GM12878 (cell line): ENCODE measurements at regions of chr12 and their contacts with region 1.

Region 1: DNA sequence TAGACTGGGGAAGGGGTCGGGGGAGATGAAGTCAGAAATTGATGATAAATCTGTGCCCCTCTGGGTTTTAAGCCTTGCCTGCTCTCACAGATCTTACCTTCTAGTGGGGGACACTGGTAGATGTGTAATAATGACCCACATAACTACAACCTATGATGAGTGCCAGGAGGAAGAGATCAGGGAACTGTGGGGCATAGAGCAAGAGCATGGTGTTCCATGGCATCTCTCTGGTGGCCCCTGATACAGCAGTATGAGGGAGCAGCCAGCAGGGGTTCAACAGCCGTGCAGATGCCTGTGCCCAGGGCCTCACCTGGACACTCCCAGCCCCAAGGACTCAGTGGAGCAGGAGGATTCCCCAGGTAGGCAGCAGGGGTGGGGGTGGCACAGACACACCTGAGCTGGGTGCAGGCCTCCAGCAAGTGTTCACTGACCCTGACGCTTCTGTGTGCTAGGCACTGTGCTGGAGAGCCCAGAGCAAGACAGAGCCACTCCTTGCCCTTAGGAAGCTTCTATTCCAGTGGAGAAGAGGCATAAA is 5.0 kb downstream of the ACACB start:
- DNase-seq: no peak
- ATAC-seq: no peak
- H3K4me3 ChIP-seq: no peak overlapping the region
- H3K27ac ChIP-seq: no peak overlapping the region
- H3K4me1 ChIP-seq: no peaks in the 10 kb centered on the region
- H3K27me3 ChIP-seq: no peaks in the 10 kb centered on the region
- CTCF ChIP-seq: no peak
- EP300 ChIP-seq: no peak
- POLR2A ChIP-seq: no peak
- RAD21 ChIP-seq: no peak

Region 2: GRCh38 chr12:108930155-108930554 is 191.3 kb before region 1 on chr12:
- CTCF ChIA-PET with region 1: no interaction called
- POLR2A ChIA-PET with region 1: no interaction called
- RAD21 ChIA-PET with region 1: no interaction called
- SMC1A ChIA-PET with region 1: no interaction called
- in situ Hi-C with region 1: no loop called
- intact Hi-C with region 1: no loop called
- DNase-seq: peak; percentile 35
- ATAC-seq: peak; percentile 96
- H3K4me3 ChIP-seq: no peak overlapping the region
- H3K27ac ChIP-seq: no peak overlapping the region
- H3K4me1 ChIP-seq: peaks cover 19% of the 10 kb centered on the region
- H3K27me3 ChIP-seq: no peaks in the 10 kb centered on the region
- CTCF ChIP-seq: no peak
- EP300 ChIP-seq: no peak
- POLR2A ChIP-seq: no peak
- RAD21 ChIP-seq: no peak

Region 3: GRCh38 chr12:109054520-109054919 is 66.9 kb before region 1 on chr12:
- CTCF ChIA-PET with region 1: no interaction called
- POLR2A ChIA-PET with region 1: no interaction called
- RAD21 ChIA-PET with region 1: no interaction called
- SMC1A ChIA-PET with region 1: no interaction called
- in situ Hi-C with region 1: no loop called
- intact Hi-C with region 1: no loop called
- DNase-seq: no peak
- ATAC-seq: no peak
- H3K4me3 ChIP-seq: no peak overlapping the region; the same call in 1 of the 2 replicates
- H3K27ac ChIP-seq: peak overlapping the region; percentile 89
- H3K4me1 ChIP-seq: peaks cover 8% of the 10 kb centered on the region; the same call in 1 of the 2 replicates
- H3K27me3 ChIP-seq: no peaks in the 10 kb centered on the region
- CTCF ChIP-seq: no peak
- EP300 ChIP-seq: no peak
- POLR2A ChIP-seq: no peak
- RAD21 ChIP-seq: no peak

Region 4: DNA sequence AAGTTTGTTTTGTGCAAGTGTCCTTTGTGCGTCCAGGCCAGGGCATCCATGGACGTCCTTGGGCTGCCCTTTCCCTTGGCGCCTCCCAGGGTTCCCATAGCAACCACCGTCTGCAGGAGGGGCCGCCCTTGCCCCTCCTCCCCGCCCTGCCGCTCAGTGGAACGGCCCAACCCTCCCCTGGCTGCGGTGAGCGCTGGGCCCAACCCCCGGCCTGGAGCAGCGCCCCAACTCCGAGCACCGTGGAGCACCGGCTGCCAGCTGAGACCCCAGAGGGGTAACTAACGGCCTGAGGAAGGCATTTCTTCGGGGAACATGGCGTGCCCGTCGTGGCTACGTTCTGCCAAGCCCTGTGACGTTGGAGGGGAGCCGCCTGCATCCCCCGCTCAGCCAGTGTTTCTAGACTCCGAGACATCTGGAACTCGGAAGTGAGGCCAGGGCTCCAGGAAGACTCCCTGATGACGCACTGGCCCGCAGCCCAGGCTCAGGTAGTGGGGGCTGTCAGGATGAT is 10.4 kb before region 1 on chr12:
- CTCF ChIA-PET with region 1: interaction called, 13 read pairs
- POLR2A ChIA-PET with region 1: no interaction called
- RAD21 ChIA-PET with region 1: interaction called, 4 read pairs
- SMC1A ChIA-PET with region 1: no interaction called
- in situ Hi-C with region 1: no loop called
- intact Hi-C with region 1: no loop called
- DNase-seq: no peak
- ATAC-seq: no peak; the same call in 2 of the 3 replicates
- H3K4me3 ChIP-seq: peak overlapping the region; percentile 37; the same call in 1 of the 2 replicates
- H3K27ac ChIP-seq: no peak overlapping the region
- H3K4me1 ChIP-seq: no peaks in the 10 kb centered on the region
- H3K27me3 ChIP-seq: no peaks in the 10 kb centered on the region
- CTCF ChIP-seq: no peak
- EP300 ChIP-seq: no peak
- POLR2A ChIP-seq: peak; percentile 69
- RAD21 ChIP-seq: no peak

Region 5: GRCh38 chr12:109258607-109259544 is 137.5 kb after region 1 on chr12:
- CTCF ChIA-PET with region 1: no interaction called
- POLR2A ChIA-PET with region 1: no interaction called
- RAD21 ChIA-PET with region 1: no interaction called
- SMC1A ChIA-PET with region 1: no interaction called
- in situ Hi-C with region 1: no loop called
- intact Hi-C with region 1: no loop called
- DNase-seq: no peak
- ATAC-seq: no peak
- H3K4me3 ChIP-seq: no peak overlapping the region
- H3K27ac ChIP-seq: no peak overlapping the region
- H3K4me1 ChIP-seq: no peaks in the 10 kb centered on the region
- H3K27me3 ChIP-seq: no peaks in the 10 kb centered on the region
- CTCF ChIP-seq: no peak
- EP300 ChIP-seq: no peak
- POLR2A ChIP-seq: no peak
- RAD21 ChIP-seq: no peak